ENCODE measurements at regions of chr10 and their contacts with region 1.

Region 1: DNA sequence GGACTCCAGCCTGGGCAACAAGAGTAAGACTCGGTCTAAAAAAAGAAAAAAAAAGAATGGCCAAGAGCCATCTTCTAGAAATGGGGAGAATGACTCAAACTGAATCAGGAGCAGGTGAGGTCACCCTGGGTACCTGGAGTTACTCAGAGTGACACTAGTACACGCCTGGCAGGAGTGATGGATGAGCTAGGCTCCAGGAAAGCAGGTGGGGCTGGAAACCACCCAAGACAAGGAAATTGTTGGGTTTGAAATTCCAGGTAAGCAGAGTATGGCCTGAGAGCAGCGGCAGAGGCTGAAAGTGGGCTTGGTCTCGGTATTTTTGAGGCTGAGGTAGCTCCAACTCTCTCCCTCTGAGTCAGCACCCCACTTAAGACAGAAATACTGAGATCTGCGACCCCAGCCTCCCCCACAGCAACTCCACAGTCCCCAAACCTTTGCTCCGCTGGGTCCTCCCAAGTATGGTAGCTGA is 18.5 kb downstream of the DDIT4 start:
- DNase-seq: peak; percentile 88
- ATAC-seq: peak; percentile 54
- H3K4me3 Mint-ChIP-seq: peak overlapping the region; percentile 41
- H3K27ac Mint-ChIP-seq: peak overlapping the region; percentile 99
- H3K4me1 Mint-ChIP-seq: peaks cover 55% of the 10 kb centered on the region
- H3K27me3 Mint-ChIP-seq: no peaks in the 10 kb centered on the region
- CTCF ChIP-seq: no peak

Region 2: GRCh38 chr10:71999360-72000072 is 292.7 kb before region 1 on chr10:
- CTCF ChIA-PET with region 1: no interaction called
- POLR2A ChIA-PET with region 1: no interaction called
- intact Hi-C with region 1: no loop called
- DNase-seq: no peak
- ATAC-seq: no peak
- H3K4me3 Mint-ChIP-seq: no peak overlapping the region
- H3K27ac Mint-ChIP-seq: no peak overlapping the region
- H3K4me1 Mint-ChIP-seq: no peaks in the 10 kb centered on the region
- H3K27me3 Mint-ChIP-seq: no peaks in the 10 kb centered on the region
- CTCF ChIP-seq: no peak

Region 3: DNA sequence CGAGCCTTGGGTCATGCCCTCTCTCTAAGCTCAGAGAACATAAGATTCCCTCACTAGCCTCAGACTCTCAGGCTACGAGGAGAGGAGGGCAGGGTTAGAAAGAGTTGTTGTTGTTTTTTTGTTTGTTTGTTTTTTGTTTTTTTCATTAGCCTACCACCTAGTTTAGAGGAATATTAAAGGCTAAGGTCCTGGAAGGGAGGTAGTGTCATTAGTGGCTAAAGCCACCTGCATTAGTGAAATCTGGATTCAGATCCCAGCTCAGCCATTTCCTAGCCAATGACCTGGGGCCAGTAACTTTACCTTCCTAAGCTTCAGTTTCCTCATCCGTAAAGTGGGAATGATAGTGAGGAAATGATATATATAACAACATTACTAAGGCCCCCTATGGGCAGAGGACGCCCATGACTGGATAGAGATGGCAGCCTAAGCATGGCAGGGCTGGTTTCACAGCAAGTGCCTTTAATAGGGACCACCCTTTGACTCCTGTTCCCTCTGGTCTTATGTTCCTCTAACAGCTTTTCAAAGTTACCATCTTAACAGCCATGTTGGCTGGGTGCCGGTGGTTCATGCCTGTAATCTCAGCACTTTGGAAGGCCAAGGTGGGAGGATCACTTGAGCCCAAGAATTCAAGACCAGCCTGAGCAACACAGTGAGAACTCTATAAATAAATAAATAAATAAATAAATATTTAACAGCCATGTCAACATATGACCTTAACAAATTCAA is 13.4 kb before region 1 on chr10:
- CTCF ChIA-PET with region 1: interaction called, 36 read pairs
- POLR2A ChIA-PET with region 1: interaction called, 269 read pairs
- intact Hi-C with region 1: no loop called
- DNase-seq: no peak
- ATAC-seq: no peak
- H3K4me3 Mint-ChIP-seq: no peak overlapping the region
- H3K27ac Mint-ChIP-seq: peak overlapping the region; percentile 42
- H3K4me1 Mint-ChIP-seq: peaks cover 27% of the 10 kb centered on the region
- H3K27me3 Mint-ChIP-seq: no peaks in the 10 kb centered on the region
- CTCF ChIP-seq: peak; percentile 36

Measured in activated CD8-positive, alpha-beta T cell treated with anti-CD3 and anti-CD28 coated beads for 36 hours (primary cell).